GM12878 (cell line): ENCODE measurements at regions of chr15 and their contacts with region 1.

Region 1: DNA sequence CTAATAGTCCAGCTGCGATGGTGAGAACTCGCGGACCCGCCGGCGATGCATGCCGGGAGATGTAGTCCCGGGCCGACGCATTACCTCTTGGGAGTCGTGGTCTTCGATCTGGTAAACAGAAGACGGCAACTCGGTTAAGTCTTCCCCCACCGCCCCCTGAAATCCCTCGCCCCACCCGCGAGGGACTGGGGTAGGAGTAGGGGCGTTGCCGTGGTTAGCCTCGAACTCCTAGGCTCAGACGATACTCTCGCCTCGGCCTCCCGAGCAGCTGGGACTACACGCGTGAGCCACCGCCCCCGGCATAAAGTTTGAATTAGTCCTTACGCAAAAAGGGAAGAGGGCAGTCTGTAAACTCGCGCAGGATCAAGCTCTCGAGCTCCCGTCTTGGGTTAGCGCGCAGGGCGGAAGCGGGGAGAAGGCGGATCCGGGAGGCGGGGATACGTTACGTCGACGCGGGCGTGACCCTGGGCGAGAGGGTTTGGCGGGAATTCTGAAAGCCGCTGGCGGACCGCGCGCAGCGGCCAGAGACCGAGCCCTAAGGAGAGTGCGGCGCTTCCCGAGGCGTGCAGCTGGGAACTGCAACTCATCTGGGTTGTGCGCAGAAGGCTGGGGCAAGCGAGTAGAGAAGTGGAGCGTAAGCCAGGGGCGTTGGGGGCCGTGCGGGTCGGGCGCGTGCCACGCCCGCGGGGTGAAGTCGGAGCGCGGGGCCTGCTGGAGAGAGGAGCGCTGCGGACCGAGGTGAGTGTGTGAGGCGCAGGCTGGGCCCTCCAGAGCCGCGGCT is at the start of gene RAD51:
- DNase-seq: peak; percentile 84
- ATAC-seq: peak; percentile 95
- H3K4me3 ChIP-seq: peak within 1 kb of the TSS; percentile 96
- H3K27ac ChIP-seq: peak within 1 kb of the TSS; percentile 86
- H3K4me1 ChIP-seq: peaks cover 2% of the 10 kb centered on the region
- H3K27me3 ChIP-seq: no peaks in the 10 kb centered on the region
- CTCF ChIP-seq: no peak
- EP300 ChIP-seq: 0 out of 4 replicates have a peak, but pooled peaks of 1 of the 2 experiments have one; percentile 40
- POLR2A ChIP-seq: peak; percentile 82
- RAD21 ChIP-seq: no peak
- polyA plus RNA-seq, gene RAD51: 13.1 to 23.6 TPM

Region 2: DNA sequence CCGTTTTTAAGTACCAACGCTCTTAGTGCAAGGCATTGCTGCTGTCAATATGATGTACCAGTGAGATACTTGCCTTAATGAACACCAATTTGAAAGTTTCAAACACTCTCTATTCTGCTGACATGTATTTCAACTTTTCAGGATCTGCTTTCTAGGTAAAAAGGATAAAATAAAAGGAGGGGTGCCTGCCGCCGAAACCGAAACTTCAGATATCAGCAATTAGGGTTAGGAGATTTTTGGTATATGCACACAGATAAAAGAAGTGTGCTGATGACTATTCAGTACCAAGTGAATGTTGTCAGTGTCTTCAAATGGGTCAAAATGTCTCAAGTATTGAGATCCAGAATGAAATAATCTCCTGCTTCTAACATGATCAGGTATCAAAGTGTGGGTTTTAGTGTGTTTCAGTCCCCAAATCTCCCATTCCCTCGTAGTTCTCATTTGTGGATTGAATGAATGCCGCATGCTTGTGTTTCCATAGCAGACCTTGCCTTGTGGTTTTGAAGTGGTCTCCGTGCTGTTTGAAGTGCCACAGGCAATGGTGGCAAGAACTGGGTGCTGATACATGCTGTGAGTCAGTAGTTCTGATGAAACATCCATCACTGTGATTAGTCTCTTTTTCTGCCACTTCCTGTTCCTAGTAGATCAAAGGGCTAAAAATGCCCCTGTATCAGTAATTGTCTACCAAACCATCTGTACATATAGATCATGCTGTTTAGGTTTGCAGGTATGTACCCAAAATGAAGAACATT is 201.6 kb before region 1 on chr15:
- CTCF ChIA-PET with region 1: no interaction called
- POLR2A ChIA-PET with region 1: no interaction called
- RAD21 ChIA-PET with region 1: no interaction called
- SMC1A ChIA-PET with region 1: no interaction called
- in situ Hi-C with region 1: no loop called
- intact Hi-C with region 1: no loop called
- DNase-seq: no peak
- ATAC-seq: peak; percentile 86
- H3K4me3 ChIP-seq: no peak overlapping the region
- H3K27ac ChIP-seq: no peak overlapping the region
- H3K4me1 ChIP-seq: no peaks in the 10 kb centered on the region
- H3K27me3 ChIP-seq: no peaks in the 10 kb centered on the region; a peak in 1 of 4 replicates
- CTCF ChIP-seq: no peak
- EP300 ChIP-seq: no peak
- POLR2A ChIP-seq: no peak
- RAD21 ChIP-seq: no peak

Region 3: DNA sequence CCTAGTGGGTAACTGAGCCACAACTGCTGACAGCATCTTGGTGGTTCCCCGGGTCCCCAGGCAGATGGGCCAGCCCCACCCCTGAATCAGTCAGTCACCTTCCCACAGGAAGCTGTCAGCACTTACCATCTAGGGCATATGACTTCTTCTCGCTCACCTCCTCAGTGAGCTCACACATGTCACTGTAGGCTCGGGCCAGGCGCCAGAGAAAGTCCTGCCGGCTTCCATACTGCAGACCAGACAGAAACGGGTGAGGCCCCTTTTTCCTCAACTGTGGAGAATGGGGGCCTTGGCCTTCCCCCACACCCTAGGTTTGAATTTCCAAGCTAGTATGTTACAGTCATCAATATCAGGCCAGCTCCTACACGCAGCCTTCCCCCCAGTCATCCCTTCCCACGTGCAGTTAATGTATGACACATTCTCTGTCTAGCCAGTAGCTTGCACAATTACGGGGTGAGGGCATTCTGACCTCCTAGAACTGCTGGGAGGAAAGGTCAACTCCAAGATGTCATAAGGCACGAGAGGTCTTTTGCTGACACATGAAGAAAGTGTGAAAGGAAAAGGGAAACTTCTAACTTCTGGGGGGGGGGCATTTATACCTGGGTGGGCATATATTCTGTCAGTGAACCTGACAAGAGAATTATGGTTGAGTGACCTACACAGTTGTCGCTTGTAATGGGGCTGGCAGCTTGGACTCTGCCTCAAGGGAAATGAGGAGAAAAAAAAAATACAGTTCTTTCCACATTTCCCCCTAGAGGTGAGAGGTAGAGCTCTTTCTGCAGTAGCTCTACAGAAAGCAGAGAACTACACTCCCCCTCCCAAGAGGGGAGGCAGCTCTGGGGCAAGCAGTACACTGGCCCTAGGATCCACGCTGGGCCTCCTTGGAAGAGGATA is 49.3 kb after region 1 on chr15:
- CTCF ChIA-PET with region 1: interaction called, 4 read pairs
- POLR2A ChIA-PET with region 1: no interaction called
- RAD21 ChIA-PET with region 1: interaction called, 11 read pairs
- SMC1A ChIA-PET with region 1: interaction called, 3 read pairs
- in situ Hi-C with region 1: no loop called
- intact Hi-C with region 1: no loop called
- DNase-seq: no peak
- ATAC-seq: peak; percentile 67
- H3K4me3 ChIP-seq: no peak overlapping the region
- H3K27ac ChIP-seq: no peak overlapping the region
- H3K4me1 ChIP-seq: peaks cover 9% of the 10 kb centered on the region
- H3K27me3 ChIP-seq: no peaks in the 10 kb centered on the region
- CTCF ChIP-seq: no peak
- EP300 ChIP-seq: no peak
- POLR2A ChIP-seq: no peak
- RAD21 ChIP-seq: no peak

Region 4: DNA sequence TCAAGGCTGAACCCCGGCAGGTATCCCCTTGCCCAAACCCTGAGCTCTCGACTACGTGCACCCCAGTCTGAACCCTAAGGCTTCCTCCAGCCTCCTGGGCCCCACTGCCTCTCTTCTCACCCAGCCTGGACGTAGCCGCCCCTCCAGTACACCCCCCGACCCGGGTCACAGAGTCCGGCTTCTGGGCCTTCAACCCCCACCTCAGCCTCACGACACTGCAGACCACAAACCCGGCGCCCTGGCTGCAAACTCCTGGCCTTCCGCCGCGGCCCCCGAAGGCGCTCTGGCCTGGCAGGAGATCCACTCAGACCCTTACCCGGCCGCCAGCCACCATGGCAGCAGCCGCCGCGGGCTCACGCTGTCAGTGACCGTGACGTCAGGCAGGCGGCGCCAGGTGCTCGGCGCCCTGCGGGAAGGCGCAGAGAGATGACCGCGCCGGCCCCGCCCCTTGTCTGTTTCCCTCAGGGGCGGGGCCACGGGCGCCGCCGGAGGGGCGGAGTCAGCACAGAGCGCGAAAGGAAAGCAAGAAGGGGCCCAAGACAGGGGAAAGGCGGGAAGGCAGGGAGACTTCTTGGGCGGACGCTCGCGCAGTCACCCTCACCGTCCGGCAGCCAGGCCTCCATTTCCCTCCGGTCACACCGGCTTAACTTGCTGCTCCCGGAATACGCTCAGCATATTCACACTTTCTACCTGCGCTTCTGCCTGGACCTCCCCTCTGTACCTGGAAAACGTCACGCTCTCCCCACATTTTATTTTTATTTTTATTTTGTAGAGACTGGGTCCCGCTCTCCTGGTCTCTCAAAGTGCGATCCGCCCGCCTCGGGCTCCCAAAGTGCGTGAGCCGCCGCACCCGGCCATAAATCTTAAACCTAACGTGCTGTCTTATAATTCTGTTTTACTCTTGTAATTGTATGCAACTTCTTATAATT is 60.3 kb after region 1 on chr15 and contains the start of gene RMDN3:
- CTCF ChIA-PET with region 1: interaction called, 3 read pairs
- POLR2A ChIA-PET with region 1: interaction called, 4 read pairs
- RAD21 ChIA-PET with region 1: no interaction called
- SMC1A ChIA-PET with region 1: interaction called, 8 read pairs
- in situ Hi-C with region 1: loop called (anchors 5 kb)
- intact Hi-C with region 1: loop called (anchors 1 kb)
- DNase-seq: peak; percentile 69
- ATAC-seq: peak; percentile 89
- H3K4me3 ChIP-seq: peak within 1 kb of the TSS; percentile 91
- H3K27ac ChIP-seq: peak within 1 kb of the TSS; percentile 86
- H3K4me1 ChIP-seq: peaks cover 3% of the 10 kb centered on the region
- H3K27me3 ChIP-seq: no peaks in the 10 kb centered on the region
- CTCF ChIP-seq: no peak
- EP300 ChIP-seq: no peak; a peak in 1 of 4 replicates
- POLR2A ChIP-seq: peak; percentile 93
- RAD21 ChIP-seq: no peak
- polyA plus RNA-seq, gene RMDN3: 5.7 to 10.2 TPM

Region 5: GRCh38 chr15:40807028-40807887 is 112.4 kb after region 1 on chr15 and contains the starts of genes DNAJC17 and ZFYVE19:
- CTCF ChIA-PET with region 1: no interaction called
- POLR2A ChIA-PET with region 1: interaction called, 10 read pairs
- RAD21 ChIA-PET with region 1: no interaction called
- SMC1A ChIA-PET with region 1: interaction called, 4 read pairs
- in situ Hi-C with region 1: no loop called
- intact Hi-C with region 1: no loop called
- DNase-seq: peak; percentile 93
- ATAC-seq: peak; percentile 97
- H3K4me3 ChIP-seq: peak within 1 kb of the TSS; percentile 79
- H3K27ac ChIP-seq: peak within 1 kb of the TSS; percentile 98
- H3K4me1 ChIP-seq: peaks cover 15% of the 10 kb centered on the region; the same call in 1 of the 2 replicates
- H3K27me3 ChIP-seq: no peaks in the 10 kb centered on the region
- CTCF ChIP-seq: peak in 1 of 3 experiments; percentile 20; a peak in 1 of 6 replicates
- EP300 ChIP-seq: no peak
- POLR2A ChIP-seq: peak; percentile 90
- RAD21 ChIP-seq: no peak
- polyA plus RNA-seq, gene DNAJC17: 6.1 to 11.5 TPM
- polyA plus RNA-seq, gene ZFYVE19: 1.7 to 4.4 TPM

Region 6: DNA sequence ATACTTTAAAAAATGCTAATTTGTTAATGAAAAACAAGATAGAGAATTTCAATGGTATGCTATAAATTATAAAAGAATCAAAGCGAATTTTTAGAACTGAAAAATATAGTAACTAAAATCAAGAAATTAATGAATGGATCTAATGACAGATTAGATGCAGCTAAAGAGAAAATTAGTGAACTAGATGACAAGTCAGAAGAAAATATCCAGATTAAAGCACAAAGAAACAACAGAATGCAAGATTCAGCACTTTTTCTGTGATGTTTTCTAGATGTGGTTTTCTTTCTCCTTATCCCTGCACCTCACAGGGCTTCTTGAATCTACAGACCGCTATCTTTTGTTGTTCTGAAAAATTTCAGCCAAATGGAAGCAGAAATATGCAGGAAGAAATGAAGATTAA is 366.8 kb after region 1 on chr15:
- CTCF ChIA-PET with region 1: no interaction called
- POLR2A ChIA-PET with region 1: no interaction called
- RAD21 ChIA-PET with region 1: no interaction called
- SMC1A ChIA-PET with region 1: no interaction called
- in situ Hi-C with region 1: no loop called
- intact Hi-C with region 1: no loop called
- DNase-seq: no peak
- ATAC-seq: no peak
- H3K4me3 ChIP-seq: no peak overlapping the region
- H3K27ac ChIP-seq: no peak overlapping the region
- H3K4me1 ChIP-seq: no peaks in the 10 kb centered on the region
- H3K27me3 ChIP-seq: no peaks in the 10 kb centered on the region
- CTCF ChIP-seq: no peak
- EP300 ChIP-seq: no peak
- POLR2A ChIP-seq: no peak
- RAD21 ChIP-seq: no peak